ENCODE measurements at regions of chr4 and their contacts with region 1.

Region 1: GRCh38 chr4:3402491-3403347 is 39.0 kb upstream of the HGFAC start:
- DNase-seq: no peak
- H3K4me3 ChIP-seq: no peak overlapping the region
- H3K27ac ChIP-seq: no peak overlapping the region
- H3K4me1 ChIP-seq: no peaks in the 10 kb centered on the region; a peak in 1 of 7 replicates
- H3K27me3 ChIP-seq: no peaks in the 10 kb centered on the region
- CTCF ChIP-seq: no peak
- EP300 ChIP-seq: no peak
- POLR2A ChIP-seq: no peak
- RAD21 ChIP-seq: no peak

Region 2: GRCh38 chr4:3388471-3389232 is 14.1 kb before region 1 on chr4:
- CTCF ChIA-PET with region 1: interaction called, 8 read pairs
- POLR2A ChIA-PET with region 1: interaction called, 10 read pairs
- DNase-seq: peak in 1 of 2 experiments; percentile 57
- H3K4me3 ChIP-seq: no peak overlapping the region
- H3K27ac ChIP-seq: no peak overlapping the region
- H3K4me1 ChIP-seq: peaks cover 0 to 38% (median 21%) of the 10 kb centered on the region in 4 experiments; a peak in 6 of 7 replicates
- H3K27me3 ChIP-seq: no peaks in the 10 kb centered on the region; a peak in 1 of 7 replicates
- CTCF ChIP-seq: no peak
- EP300 ChIP-seq: no peak
- POLR2A ChIP-seq: no peak
- RAD21 ChIP-seq: no peak

Measured in H1 (cell line).